Activated CD4-positive, alpha-beta memory T cell treated with anti-CD3 and anti-CD28 coated beads for 36 hours (primary cell): ENCODE measurements at regions of chr4 and their contacts with region 1.

Region 1: GRCh38 chr4:130336585-130337217 is 1240.7 kb downstream of the C4orf33 start:
- DNase-seq: no peak
- H3K4me3 Mint-ChIP-seq: no peak overlapping the region
- H3K27ac Mint-ChIP-seq: no peak overlapping the region
- H3K4me1 Mint-ChIP-seq: no peaks in the 10 kb centered on the region
- H3K27me3 Mint-ChIP-seq: no peaks in the 10 kb centered on the region

Region 2: GRCh38 chr4:130186931-130187330 is 149.8 kb before region 1 on chr4:
- CTCF ChIA-PET with region 1: no interaction called
- POLR2A ChIA-PET with region 1: no interaction called
- intact Hi-C with region 1: no loop called
- DNase-seq: no peak
- H3K4me3 Mint-ChIP-seq: no peak overlapping the region
- H3K27ac Mint-ChIP-seq: no peak overlapping the region
- H3K4me1 Mint-ChIP-seq: no peaks in the 10 kb centered on the region
- H3K27me3 Mint-ChIP-seq: no peaks in the 10 kb centered on the region

Region 3: DNA sequence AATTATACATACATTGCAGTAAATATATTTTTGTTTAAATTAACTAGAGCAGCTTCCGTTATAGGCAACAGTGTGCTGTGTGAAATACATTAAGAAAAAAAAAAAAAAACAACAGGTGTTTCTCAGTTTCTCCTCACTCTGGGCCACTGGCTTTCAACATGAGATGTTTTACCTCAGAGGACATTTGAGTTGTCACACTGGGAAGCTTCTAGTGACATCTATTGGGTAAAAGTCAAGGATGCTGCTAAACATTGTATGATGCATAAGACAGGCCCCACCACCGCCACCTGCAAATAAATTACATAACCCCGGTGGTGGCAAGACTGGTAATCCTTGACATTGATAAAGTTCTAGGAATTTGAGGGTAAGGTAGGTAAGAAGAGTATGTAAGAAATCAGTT is 271.4 kb after region 1 on chr4:
- CTCF ChIA-PET with region 1: no interaction called
- POLR2A ChIA-PET with region 1: no interaction called
- intact Hi-C with region 1: loop called (anchors 5 kb)
- DNase-seq: no peak
- H3K4me3 Mint-ChIP-seq: no peak overlapping the region
- H3K27ac Mint-ChIP-seq: no peak overlapping the region
- H3K4me1 Mint-ChIP-seq: no peaks in the 10 kb centered on the region
- H3K27me3 Mint-ChIP-seq: no peaks in the 10 kb centered on the region